Calu3 (cell line): ENCODE measurements at regions of chr4 and their contacts with region 1.

Region 1: GRCh38 chr4:139734875-139735380 is 69.3 kb downstream of the MGST2 start:
- DNase-seq: peak; percentile 61
- H3K4me3 Mint-ChIP-seq: peak overlapping the region; percentile 59
- H3K27ac Mint-ChIP-seq: no peak overlapping the region
- H3K4me1 Mint-ChIP-seq: no peaks in the 10 kb centered on the region
- H3K27me3 Mint-ChIP-seq: no peaks in the 10 kb centered on the region
- CTCF ChIP-seq: peak; percentile 62

Region 2: DNA sequence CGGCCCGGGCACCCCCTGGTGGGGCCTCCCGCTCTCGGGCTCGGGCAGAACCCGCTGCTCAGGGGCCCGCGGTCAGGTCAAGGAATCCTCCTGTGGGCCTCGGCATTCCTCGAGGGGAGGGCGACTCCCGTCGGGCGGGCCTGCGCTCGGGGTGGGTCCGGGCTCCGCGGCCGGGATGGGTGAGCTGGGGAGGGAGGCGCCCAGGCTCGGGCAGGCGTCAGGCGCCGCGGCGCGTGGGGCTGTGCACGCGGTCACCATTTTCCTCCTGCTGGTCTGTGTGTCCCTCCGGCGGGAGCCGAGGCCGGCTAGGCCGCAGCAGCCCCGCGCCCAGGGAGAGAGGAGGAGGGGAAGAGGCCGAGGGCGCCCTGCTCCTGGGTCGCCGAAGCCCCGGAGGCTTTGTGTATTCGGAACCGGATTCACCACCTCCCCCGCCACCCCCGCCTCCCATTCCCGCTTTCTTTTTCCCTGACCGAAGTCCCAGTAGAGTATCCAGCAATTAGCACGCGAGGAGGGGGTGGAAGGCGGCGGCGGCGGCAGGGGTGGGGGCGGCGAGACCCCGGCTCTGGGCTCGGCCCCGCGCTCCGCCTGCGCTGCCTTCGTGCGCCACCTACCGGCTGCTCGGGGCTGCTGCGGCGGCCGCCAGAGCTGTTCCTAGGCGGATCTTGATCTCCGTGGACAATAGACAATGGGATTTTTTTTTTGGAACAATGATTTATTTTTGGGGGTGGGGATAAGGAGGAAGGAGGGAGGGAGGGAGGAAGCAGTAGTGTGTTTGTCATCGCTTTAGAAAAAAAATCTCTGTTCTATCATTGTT is 518.0 kb after region 1 on chr4:
- CTCF ChIA-PET with region 1: interaction called, 7 read pairs
- intact Hi-C with region 1: loop called (anchors 10 kb)
- DNase-seq: peak; percentile 76
- H3K4me3 Mint-ChIP-seq: peak overlapping the region; percentile 45
- H3K27ac Mint-ChIP-seq: peak overlapping the region; percentile 11
- H3K4me1 Mint-ChIP-seq: peaks cover 29% of the 10 kb centered on the region
- H3K27me3 Mint-ChIP-seq: no peaks in the 10 kb centered on the region
- CTCF ChIP-seq: peak; percentile 87